ENCODE measurements at regions of chr3 and their contacts with region 1.

Region 1: GRCh38 chr3:68328049-68328448 is 604.3 kb downstream of the TAFA4 start:
- DNase-seq: no peak
- ATAC-seq: no peak
- H3K4me3 Mint-ChIP-seq: no peak overlapping the region
- H3K27ac Mint-ChIP-seq: no peak overlapping the region
- H3K4me1 Mint-ChIP-seq: no peaks in the 10 kb centered on the region
- H3K27me3 Mint-ChIP-seq: no peaks in the 10 kb centered on the region

Region 2: DNA sequence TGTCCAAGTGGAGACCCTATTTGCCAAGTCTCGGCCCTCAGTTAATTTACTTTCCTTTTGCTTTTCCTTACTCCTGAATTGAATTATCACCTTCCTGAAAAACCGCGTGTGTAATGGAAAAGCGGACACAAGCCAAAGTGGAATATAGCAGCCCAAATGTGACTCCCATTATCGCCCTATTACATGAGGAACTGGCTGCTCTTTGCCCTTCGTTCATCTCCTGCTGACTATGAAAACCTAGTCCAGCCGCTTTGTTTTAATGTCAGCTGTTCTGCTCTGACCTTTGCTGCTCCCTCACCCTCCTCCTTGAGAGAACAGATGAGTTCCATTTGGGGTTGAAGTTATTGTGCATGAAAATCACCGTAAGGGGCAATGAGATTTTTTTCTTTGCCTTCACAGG is 40.9 kb before region 1 on chr3:
- CTCF ChIA-PET with region 1: no interaction called
- POLR2A ChIA-PET with region 1: no interaction called
- intact Hi-C with region 1: no loop called
- DNase-seq: no peak
- ATAC-seq: no peak
- H3K4me3 Mint-ChIP-seq: no peak overlapping the region
- H3K27ac Mint-ChIP-seq: no peak overlapping the region
- H3K4me1 Mint-ChIP-seq: no peaks in the 10 kb centered on the region
- H3K27me3 Mint-ChIP-seq: no peaks in the 10 kb centered on the region

Region 3: DNA sequence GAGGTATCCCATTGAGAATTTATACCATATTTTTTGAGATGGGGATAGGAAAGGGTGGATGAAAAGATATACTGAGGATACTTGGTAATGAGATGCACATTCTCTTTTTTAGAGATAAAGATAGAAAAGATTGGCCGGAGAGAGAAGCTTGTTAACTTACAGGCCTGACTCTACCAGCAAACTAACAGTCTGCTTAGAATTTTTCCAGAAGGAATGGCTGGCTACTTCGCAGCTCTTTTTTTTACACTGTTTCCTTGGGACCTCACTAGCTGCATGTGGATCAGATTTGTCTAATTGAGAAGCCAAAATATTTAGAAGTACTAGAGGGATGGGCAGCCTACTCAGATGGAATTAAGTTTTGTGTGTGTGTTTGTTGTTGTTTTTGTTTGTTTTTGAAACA is 17.7 kb after region 1 on chr3:
- CTCF ChIA-PET with region 1: no interaction called
- POLR2A ChIA-PET with region 1: no interaction called
- intact Hi-C with region 1: loop called in 1 of 2 experiments (anchors 2 kb)
- DNase-seq: no peak
- ATAC-seq: no peak
- H3K4me3 Mint-ChIP-seq: no peak overlapping the region
- H3K27ac Mint-ChIP-seq: no peak overlapping the region
- H3K4me1 Mint-ChIP-seq: no peaks in the 10 kb centered on the region
- H3K27me3 Mint-ChIP-seq: no peaks in the 10 kb centered on the region